Colonic mucosa (tissue), 4 donors: ENCODE measurements at regions of chr2 and their contacts with region 1.

Region 1: GRCh38 chr2:195656859-195657633 is at the start of gene SLC39A10:
- DNase-seq: peak; percentile 98
- H3K4me3 ChIP-seq: peak within 1 kb of the TSS; percentile 94
- H3K27ac ChIP-seq: peak within 1 kb of the TSS; percentile 99
- H3K4me1 ChIP-seq: peaks cover 6% of the 10 kb centered on the region
- H3K27me3 ChIP-seq: no peaks in the 10 kb centered on the region
- CTCF ChIP-seq: no peak
- total RNA-seq, gene SLC39A10: 12.8 to 16.5 TPM

Region 2: GRCh38 chr2:195500879-195501278 is 156.2 kb before region 1 on chr2:
- intact Hi-C with region 1: loop called (anchors 5 kb)
- DNase-seq: no peak
- H3K4me3 ChIP-seq: no peak overlapping the region
- H3K27ac ChIP-seq: no peak overlapping the region
- H3K4me1 ChIP-seq: no peaks in the 10 kb centered on the region
- H3K27me3 ChIP-seq: no peaks in the 10 kb centered on the region
- CTCF ChIP-seq: no peak

Region 3: DNA sequence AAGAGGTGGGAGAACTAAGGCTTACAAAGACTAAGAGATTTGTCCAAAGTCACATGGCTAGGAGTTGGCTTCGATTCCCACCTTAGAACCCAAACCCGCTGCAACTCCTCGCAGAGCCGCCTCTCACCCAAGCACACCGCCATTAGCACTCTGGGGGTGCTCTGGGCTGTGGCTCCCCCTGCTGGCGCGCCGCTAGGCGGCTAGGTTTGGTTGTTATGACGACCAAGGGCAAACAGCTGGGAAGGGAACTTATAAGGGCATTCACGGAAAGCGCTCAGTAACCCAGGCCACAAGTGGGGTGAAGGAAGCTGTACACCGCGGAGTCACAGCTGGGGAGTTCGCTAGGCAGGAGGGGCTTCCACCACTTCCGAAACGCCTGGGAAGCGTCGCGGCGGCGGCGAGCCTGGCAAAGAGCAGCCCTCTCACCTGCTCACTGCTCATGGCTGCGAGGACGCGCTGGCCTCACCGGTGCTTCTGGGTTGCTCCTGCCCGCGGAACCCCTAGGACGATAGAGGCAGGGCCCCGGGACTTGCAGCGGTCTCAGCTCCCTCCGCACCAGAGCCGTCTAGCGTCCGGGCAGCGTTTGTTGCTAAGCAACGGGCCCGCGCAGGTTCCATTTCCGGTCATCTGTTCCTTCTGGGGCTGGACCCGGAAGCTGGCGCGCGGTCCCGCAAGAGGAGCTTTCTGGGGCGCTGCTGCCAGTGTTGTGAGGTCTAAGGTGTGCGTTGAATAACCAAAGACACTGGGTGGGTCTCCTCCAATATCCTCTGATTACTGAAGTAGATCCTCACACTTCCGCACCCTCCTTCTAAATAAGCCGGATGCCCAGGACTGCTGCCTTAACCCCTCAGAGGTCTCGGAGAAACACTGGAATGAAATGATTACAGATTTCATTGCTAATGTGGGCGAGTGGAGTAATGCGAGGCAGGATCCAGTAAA is 411.5 kb after region 1 on chr2 and contains the start of gene DNAH7:
- intact Hi-C with region 1: loop called (anchors 5 kb)
- DNase-seq: peak; percentile 91
- H3K4me3 ChIP-seq: peak within 1 kb of the TSS; percentile 80
- H3K27ac ChIP-seq: peak within 1 kb of the TSS; percentile 68
- H3K4me1 ChIP-seq: peaks cover 3% of the 10 kb centered on the region
- H3K27me3 ChIP-seq: no peaks in the 10 kb centered on the region
- CTCF ChIP-seq: peak; percentile 52
- total RNA-seq, gene DNAH7: 0.91 to 2.0 TPM